ENCODE measurements at regions of chr1 and their contacts with region 1.

Region 1: GRCh38 chr1:174262349-174263241 is 103.3 kb downstream of the RABGAP1L start:
- DNase-seq: peak; percentile 34
- H3K4me3 ChIP-seq: no peak overlapping the region
- H3K27ac ChIP-seq: no peak overlapping the region
- H3K27me3 ChIP-seq: no peaks in the 10 kb centered on the region
- CTCF ChIP-seq: peak; percentile 89

Region 2: DNA sequence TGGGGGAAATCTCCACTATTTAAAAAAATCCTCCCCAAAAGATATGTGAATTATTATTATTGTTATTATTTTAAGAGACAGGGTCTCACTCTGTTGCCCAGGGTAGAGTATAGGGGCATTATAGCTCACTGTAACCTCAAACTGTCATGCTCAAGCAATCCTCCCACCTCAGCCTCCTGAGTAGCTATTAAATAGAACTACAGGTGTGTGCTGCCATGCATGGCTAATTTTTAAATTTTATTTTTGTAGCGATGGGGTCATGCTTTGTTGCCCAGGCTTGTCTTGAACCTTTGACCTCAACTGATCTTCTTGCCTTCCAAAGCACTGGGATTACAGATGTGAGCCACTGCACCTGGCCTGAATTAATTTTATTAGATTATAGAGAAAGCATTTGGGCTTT is 13.5 kb after region 1 on chr1:
- CTCF ChIA-PET with region 1: interaction called, 74 read pairs
- POLR2A ChIA-PET with region 1: no interaction called
- DNase-seq: no peak
- H3K4me3 ChIP-seq: no peak overlapping the region
- H3K27ac ChIP-seq: no peak overlapping the region
- H3K27me3 ChIP-seq: no peaks in the 10 kb centered on the region
- CTCF ChIP-seq: no peak

Region 3: DNA sequence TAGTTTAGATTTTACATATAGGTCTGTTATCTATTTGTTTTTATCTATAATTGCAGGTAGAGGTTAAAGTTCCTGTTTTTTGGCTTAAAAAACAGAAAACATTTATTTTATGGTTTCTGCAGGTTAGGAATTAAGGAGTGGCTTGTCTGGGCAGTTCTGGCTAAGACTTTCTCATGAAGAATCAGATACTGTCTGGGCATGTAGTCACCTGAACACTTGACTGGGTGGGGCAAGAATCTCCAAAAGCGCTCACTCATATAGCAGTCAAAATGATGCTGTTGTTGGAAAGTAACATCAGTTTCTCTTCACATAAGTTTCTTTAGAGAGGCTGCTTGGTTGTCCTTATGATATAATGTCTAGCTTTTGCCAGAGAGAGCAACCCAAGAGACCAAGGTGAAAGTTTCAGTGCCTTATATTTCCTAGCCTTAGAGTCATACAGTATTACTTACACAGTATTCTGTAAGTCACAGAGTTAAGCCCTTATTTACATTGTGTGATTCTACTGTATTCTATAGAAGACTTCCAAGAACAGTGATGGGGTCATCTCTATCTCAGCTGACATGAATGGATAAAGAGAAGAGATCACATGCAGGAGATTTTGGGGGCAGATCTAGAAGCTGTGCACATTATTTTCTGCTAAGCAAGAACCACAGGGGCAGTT is 59.7 kb after region 1 on chr1:
- CTCF ChIA-PET with region 1: no interaction called
- POLR2A ChIA-PET with region 1: no interaction called
- DNase-seq: no peak
- H3K4me3 ChIP-seq: no peak overlapping the region
- H3K27ac ChIP-seq: no peak overlapping the region
- H3K27me3 ChIP-seq: no peaks in the 10 kb centered on the region
- CTCF ChIP-seq: no peak

Region 4: DNA sequence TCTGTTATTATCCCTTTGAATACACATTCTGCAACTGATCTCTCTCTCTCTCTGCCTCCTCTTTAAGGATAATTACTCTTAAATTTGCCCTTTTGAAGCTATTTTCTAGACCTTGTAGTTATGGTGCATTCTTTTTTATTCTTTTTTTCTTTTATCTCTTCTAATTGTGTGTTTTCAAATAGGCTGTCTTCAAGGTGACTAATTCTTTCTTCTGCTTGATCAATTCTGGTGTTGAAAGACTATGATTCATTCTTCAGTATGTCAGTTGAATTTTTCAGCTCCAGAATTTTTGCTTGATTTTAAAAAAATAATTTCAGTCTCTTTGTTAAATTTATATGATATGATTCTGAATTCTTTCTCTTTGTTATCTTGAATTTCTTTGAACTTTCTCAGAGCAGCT is 89.5 kb after region 1 on chr1:
- CTCF ChIA-PET with region 1: no interaction called
- POLR2A ChIA-PET with region 1: no interaction called
- DNase-seq: no peak
- H3K4me3 ChIP-seq: no peak overlapping the region
- H3K27ac ChIP-seq: no peak overlapping the region
- H3K27me3 ChIP-seq: no peaks in the 10 kb centered on the region
- CTCF ChIP-seq: no peak

Region 5: GRCh38 chr1:174639461-174639860 is 376.9 kb after region 1 on chr1:
- CTCF ChIA-PET with region 1: interaction called, 15 read pairs
- POLR2A ChIA-PET with region 1: no interaction called
- DNase-seq: no peak
- H3K4me3 ChIP-seq: no peak overlapping the region
- H3K27ac ChIP-seq: no peak overlapping the region
- H3K27me3 ChIP-seq: no peaks in the 10 kb centered on the region
- CTCF ChIP-seq: no peak

Region 6: DNA sequence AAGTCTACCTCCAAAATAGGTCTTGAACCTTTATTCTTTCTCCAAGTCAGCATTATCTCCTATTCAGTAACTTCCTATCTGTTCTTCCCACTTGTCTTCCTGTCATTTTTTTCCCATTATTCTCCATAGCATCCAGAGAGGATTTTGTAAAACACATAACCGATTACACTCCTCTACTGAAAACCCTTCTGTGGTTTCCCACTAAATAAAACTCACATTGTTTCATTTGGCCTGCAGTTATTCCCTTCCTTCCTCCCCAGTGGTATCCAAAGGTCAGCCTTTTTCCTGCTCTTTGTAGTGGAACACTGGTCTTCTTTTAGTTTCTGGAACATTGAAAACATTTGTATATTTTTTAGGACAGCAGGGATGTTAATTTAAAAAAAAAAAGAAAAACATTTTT is 451.2 kb after region 1 on chr1:
- CTCF ChIA-PET with region 1: interaction called, 13 read pairs
- POLR2A ChIA-PET with region 1: no interaction called
- DNase-seq: no peak
- H3K4me3 ChIP-seq: no peak overlapping the region
- H3K27ac ChIP-seq: no peak overlapping the region
- H3K27me3 ChIP-seq: no peaks in the 10 kb centered on the region
- CTCF ChIP-seq: no peak

Region 7: GRCh38 chr1:174736831-174737230 is 474.2 kb after region 1 on chr1:
- CTCF ChIA-PET with region 1: interaction called, 243 read pairs
- POLR2A ChIA-PET with region 1: interaction called, 7 read pairs
- DNase-seq: no peak
- H3K4me3 ChIP-seq: no peak overlapping the region
- H3K27ac ChIP-seq: no peak overlapping the region
- H3K27me3 ChIP-seq: no peaks in the 10 kb centered on the region
- CTCF ChIP-seq: no peak

Measured in AG04450 (cell line).